BJ (cell line): ENCODE measurements at regions of chr2 and their contacts with region 1.

Region 1: GRCh38 chr2:218360447-218360846 is 3.8 kb downstream of the CATIP start:
- DNase-seq: no peak
- H3K4me3 ChIP-seq: no peak overlapping the region
- H3K27me3 ChIP-seq: peaks cover 2% of the 10 kb centered on the region; the same call in 1 of the 2 replicates
- CTCF ChIP-seq: no peak

Region 2: DNA sequence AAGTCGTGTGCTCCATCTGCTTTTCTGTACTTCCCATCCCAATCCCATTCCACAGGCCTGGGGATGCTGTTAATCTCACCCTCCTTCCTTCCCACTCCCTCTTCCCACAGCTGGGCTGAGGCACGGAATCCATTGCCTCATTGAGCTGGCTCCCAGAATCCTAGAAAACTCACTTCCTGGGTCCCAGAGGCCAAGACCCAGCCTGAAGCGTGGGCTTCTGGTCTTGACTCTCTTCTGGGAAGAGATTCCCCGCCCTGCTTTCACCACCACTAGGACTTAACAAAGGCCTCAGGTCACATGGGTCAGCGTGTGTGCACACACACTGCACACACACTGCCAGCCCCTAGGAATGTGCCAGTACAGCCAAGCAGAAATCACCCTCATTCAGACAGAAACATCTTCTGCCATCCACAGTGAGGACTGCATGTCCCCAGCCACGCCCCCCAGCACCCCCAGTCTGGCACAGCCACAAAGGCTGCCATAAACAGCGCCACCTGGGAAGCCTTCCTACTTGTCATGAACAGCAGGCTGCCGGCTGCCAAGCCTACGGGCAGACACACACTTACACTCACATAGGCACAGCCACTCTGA is 523.5 kb before region 1 on chr2:
- CTCF ChIA-PET with region 1: no interaction called
- POLR2A ChIA-PET with region 1: no interaction called
- DNase-seq: peak; percentile 7
- H3K4me3 ChIP-seq: no peak overlapping the region
- H3K27me3 ChIP-seq: no peaks in the 10 kb centered on the region
- CTCF ChIP-seq: peak; percentile 39

Region 3: DNA sequence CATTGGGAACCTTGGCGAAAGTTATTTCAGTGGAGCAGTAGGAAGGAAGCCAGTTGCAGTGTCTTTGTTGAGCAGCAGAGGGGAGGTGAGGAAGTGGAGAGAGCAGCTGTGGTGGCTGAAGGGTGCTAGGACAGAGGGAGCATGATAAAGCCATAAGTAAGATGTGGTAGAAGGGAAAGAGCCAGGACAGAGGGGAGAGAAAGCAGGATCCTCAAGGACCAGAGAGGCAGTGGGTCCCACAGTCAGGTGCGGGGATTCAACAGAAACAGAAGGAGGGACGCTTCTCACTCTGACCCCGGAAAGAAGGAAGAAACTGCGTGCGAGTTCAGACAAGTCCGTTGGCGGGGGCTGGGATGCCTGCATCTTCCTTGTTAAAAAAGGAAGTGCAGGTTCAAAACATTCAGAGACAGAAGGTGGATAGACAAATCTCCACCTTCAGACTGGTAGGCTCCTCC is 234.8 kb before region 1 on chr2 and contains the start of gene CXCR2:
- CTCF ChIA-PET with region 1: no interaction called
- POLR2A ChIA-PET with region 1: no interaction called
- DNase-seq: no peak
- H3K4me3 ChIP-seq: no peak within 1 kb of the TSS
- H3K27me3 ChIP-seq: peaks cover 18% of the 10 kb centered on the region
- CTCF ChIP-seq: no peak
- polyA plus RNA-seq, gene CXCR2: not detected in 2 replicates

Region 4: GRCh38 chr2:218194880-218195279 is 165.6 kb before region 1 on chr2:
- CTCF ChIA-PET with region 1: no interaction called
- POLR2A ChIA-PET with region 1: no interaction called
- DNase-seq: no peak
- H3K4me3 ChIP-seq: no peak overlapping the region
- H3K27me3 ChIP-seq: peaks cover 2% of the 10 kb centered on the region; the same call in 1 of the 2 replicates
- CTCF ChIP-seq: no peak

Region 5: DNA sequence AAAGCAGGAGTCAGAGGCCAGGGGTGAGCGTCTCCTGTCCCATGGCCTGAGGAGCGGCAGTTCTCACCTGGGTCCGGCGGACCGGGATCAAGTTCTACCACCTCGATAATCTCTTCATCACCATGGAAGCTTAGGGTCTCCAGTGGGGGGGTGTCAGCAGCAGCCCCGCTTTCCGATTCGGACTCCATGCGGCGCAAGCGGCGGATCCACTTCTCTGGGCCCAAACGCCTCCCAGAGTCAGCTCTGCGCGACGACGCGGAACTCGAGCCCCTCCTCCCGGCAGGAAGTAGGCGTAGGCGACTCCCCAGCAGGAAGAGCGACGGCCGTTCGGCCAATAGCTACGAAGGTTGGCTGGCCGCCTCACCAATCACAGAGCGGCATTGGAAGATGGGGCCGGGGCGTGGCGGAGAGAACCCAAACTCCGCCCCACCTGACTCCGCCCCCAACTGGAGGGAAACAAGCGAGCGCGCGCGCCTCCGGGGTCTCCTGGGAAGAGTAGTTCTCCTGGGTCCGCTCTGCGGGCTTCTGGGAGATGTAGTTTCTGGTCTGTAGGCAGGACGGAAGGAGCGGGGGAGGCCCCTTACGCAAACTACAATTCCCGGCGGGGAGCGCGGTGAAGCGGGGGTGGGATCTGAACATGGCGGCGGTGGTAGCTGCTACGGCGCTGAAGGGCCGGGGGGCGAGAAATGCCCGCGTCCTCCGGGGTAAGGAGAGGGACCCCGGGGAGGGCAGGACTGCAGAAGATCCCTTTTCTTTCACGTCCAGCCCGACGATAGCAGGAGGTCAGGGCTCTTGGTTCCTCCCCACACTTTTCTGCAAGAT is 90.3 kb before region 1 on chr2 and contains the starts of genes AAMP and PNKD:
- CTCF ChIA-PET with region 1: interaction called, 31 read pairs
- POLR2A ChIA-PET with region 1: no interaction called
- DNase-seq: peak; percentile 97
- H3K4me3 ChIP-seq: peak within 1 kb of the TSS; percentile 83
- H3K27me3 ChIP-seq: no peaks in the 10 kb centered on the region
- CTCF ChIP-seq: no peak
- polyA plus RNA-seq, gene AAMP: 65.1 and 84.9 TPM in 2 replicates
- polyA plus RNA-seq, gene PNKD: 44.5 and 54.5 TPM in 2 replicates

Region 6: GRCh38 chr2:218301176-218301819 is 59.1 kb before region 1 on chr2:
- CTCF ChIA-PET with region 1: interaction called, 244 read pairs
- POLR2A ChIA-PET with region 1: no interaction called
- DNase-seq: no peak
- H3K4me3 ChIP-seq: no peak overlapping the region
- H3K27me3 ChIP-seq: no peaks in the 10 kb centered on the region; the same call in 1 of the 2 replicates
- CTCF ChIP-seq: peak; percentile 93

Region 7: GRCh38 chr2:218322895-218323808 is 37.3 kb before region 1 on chr2:
- CTCF ChIA-PET with region 1: interaction called, 12 read pairs
- POLR2A ChIA-PET with region 1: no interaction called
- DNase-seq: no peak
- H3K4me3 ChIP-seq: peak overlapping the region; percentile 55
- H3K27me3 ChIP-seq: no peaks in the 10 kb centered on the region
- CTCF ChIP-seq: no peak

Region 8: GRCh38 chr2:218332920-218333645 is 27.4 kb before region 1 on chr2:
- CTCF ChIA-PET with region 1: interaction called, 10 read pairs
- POLR2A ChIA-PET with region 1: no interaction called
- DNase-seq: no peak
- H3K4me3 ChIP-seq: no peak overlapping the region
- H3K27me3 ChIP-seq: no peaks in the 10 kb centered on the region
- CTCF ChIP-seq: no peak

Region 9: DNA sequence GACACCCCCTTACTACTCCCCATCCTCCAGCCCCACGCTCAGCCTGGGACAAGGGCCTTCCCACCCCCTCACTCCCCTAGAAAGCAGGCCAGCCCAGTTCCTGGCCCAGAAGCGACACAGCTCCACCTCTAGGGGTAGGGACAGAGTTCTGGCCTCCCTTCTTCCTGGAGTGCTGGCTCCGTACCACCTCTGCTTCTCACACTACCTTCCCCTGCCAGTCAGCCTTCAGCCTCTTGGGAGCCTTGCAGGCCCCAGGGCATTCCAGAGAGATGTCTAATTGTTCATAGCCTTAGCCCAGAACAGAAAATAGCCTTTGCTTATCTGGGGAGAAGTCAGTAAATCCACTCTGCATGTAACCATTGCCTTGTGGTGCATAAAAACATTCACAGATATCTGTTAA is 16.9 kb before region 1 on chr2:
- CTCF ChIA-PET with region 1: interaction called, 21 read pairs
- POLR2A ChIA-PET with region 1: no interaction called
- DNase-seq: no peak
- H3K4me3 ChIP-seq: no peak overlapping the region
- H3K27me3 ChIP-seq: no peaks in the 10 kb centered on the region
- CTCF ChIP-seq: no peak